Caco-2 (cell line): ENCODE measurements at regions of chr19 and their contacts with region 1.

Region 1: GRCh38 chr19:35648017-35648961 is at the start of gene COX6B1:
- DNase-seq: peak; percentile 95 to 97
- H3K4me3 ChIP-seq: peak within 1 kb of the TSS; percentile 62
- H3K4me3 Mint-ChIP-seq: peak within 1 kb of the TSS; percentile 97
- H3K27ac Mint-ChIP-seq: peak within 1 kb of the TSS; percentile 90
- H3K4me1 ChIP-seq: peaks cover 15% of the 10 kb centered on the region
- H3K4me1 Mint-ChIP-seq: peaks cover 12% of the 10 kb centered on the region
- H3K27me3 ChIP-seq: no peaks in the 10 kb centered on the region
- H3K27me3 Mint-ChIP-seq: no peaks in the 10 kb centered on the region
- CTCF ChIP-seq: no peak
- total RNA-seq, gene COX6B1: 551 and 639 TPM in 2 replicates

Region 2: GRCh38 chr19:35545001-35545911 is 103.0 kb before region 1 on chr19 and contains the start of gene TMEM147:
- CTCF ChIA-PET with region 1: interaction called, 3 read pairs
- POLR2A ChIA-PET with region 1: no interaction called
- intact Hi-C with region 1: loop called (anchors 5 kb)
- DNase-seq: peak; percentile 91 to 96
- H3K4me3 ChIP-seq: peak within 1 kb of the TSS; percentile 90
- H3K4me3 Mint-ChIP-seq: peak within 1 kb of the TSS; percentile 95
- H3K27ac Mint-ChIP-seq: peak within 1 kb of the TSS; percentile 91
- H3K4me1 ChIP-seq: peaks cover 14% of the 10 kb centered on the region
- H3K4me1 Mint-ChIP-seq: peaks cover 24% of the 10 kb centered on the region
- H3K27me3 ChIP-seq: no peaks in the 10 kb centered on the region
- H3K27me3 Mint-ChIP-seq: no peaks in the 10 kb centered on the region
- CTCF ChIP-seq: no peak
- total RNA-seq, gene TMEM147: 126 and 140 TPM in 2 replicates

Region 3: DNA sequence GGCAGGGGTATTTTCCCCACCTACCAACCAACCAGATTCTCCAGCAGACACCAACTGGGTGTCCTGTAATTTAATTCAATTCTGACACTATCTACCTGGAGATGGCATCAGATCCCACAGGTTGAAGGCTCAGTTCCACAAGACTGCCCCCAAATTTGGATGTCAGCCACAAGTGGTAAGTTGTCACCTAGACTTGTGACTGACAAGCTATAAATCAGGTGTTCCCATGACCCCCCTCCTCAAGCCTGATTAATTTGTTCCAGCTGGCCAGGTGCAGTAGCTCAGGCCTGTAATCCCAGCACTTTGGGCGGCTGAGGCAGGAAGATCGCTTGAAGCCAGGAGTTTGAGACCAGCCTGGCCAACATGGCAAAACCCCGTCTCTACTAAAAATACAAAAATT is 46.3 kb before region 1 on chr19:
- CTCF ChIA-PET with region 1: no interaction called
- POLR2A ChIA-PET with region 1: no interaction called
- intact Hi-C with region 1: no loop called
- DNase-seq: no peak
- H3K4me3 ChIP-seq: no peak overlapping the region
- H3K4me3 Mint-ChIP-seq: no peak overlapping the region
- H3K27ac Mint-ChIP-seq: no peak overlapping the region
- H3K4me1 ChIP-seq: peaks cover 11% of the 10 kb centered on the region
- H3K4me1 Mint-ChIP-seq: peaks cover 14% of the 10 kb centered on the region
- H3K27me3 ChIP-seq: no peaks in the 10 kb centered on the region
- H3K27me3 Mint-ChIP-seq: no peaks in the 10 kb centered on the region
- CTCF ChIP-seq: no peak

Region 4: GRCh38 chr19:35612559-35613321 is 35.5 kb before region 1 on chr19 and contains the start of gene HAUS5:
- CTCF ChIA-PET with region 1: interaction called, 3 read pairs
- POLR2A ChIA-PET with region 1: interaction called, 4 read pairs
- intact Hi-C with region 1: loop called (anchors 2 kb)
- DNase-seq: peak; percentile 95 to 97
- H3K4me3 ChIP-seq: peak within 1 kb of the TSS; percentile 94
- H3K4me3 Mint-ChIP-seq: peak within 1 kb of the TSS; percentile 89
- H3K27ac Mint-ChIP-seq: peak within 1 kb of the TSS; percentile 93
- H3K4me1 ChIP-seq: 0 out of 2 replicates have a peak, but pooled peaks cover 4% of the 10 kb centered on the region
- H3K4me1 Mint-ChIP-seq: peaks cover 9% of the 10 kb centered on the region
- H3K27me3 ChIP-seq: no peaks in the 10 kb centered on the region
- H3K27me3 Mint-ChIP-seq: no peaks in the 10 kb centered on the region
- CTCF ChIP-seq: no peak
- total RNA-seq, gene HAUS5: 26.4 and 27.9 TPM in 2 replicates

Region 5: DNA sequence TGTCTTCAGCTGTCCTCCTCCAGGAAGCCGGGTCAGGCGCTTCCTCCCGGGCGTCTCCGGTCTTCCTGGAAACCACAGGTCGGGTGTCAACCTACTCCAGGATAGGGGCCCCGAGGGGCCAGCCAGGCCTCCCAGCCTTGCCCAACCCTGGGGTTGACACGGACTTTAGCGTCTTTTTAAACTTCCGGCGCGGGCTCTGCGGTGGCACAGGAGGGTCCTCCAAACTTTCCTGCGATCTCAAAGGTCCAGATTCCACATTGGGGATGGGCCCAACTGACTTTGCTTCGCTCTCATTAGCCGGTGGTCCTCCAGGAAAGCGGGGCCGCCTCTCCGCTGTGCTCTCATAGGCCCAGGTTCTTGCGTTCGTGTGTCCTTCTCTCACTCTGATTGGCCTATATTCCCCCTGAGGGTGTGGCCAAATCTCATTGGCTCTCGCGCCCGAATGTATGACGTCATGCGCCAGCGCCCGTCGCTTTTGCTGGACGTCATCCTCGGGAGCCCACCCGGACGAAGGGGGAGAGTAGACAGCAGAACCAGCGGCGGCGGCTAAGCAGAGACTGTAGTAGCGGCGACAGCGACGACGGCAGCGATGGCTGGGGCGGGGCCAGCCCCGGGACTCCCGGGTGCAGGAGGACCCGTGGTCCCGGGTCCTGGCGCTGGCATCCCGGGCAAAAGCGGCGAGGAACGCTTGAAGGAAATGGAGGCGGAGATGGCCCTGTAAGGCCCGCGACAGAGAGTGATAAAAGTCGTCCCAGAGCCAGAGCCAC is 19.5 kb before region 1 on chr19 and contains the start of gene RBM42:
- CTCF ChIA-PET with region 1: no interaction called
- POLR2A ChIA-PET with region 1: interaction called, 3 read pairs
- intact Hi-C with region 1: loop called (anchors 1 kb)
- DNase-seq: peak; percentile 99
- H3K4me3 ChIP-seq: peak within 1 kb of the TSS; percentile 90
- H3K4me3 Mint-ChIP-seq: peak within 1 kb of the TSS; percentile 100
- H3K27ac Mint-ChIP-seq: peak within 1 kb of the TSS; percentile 100
- H3K4me1 ChIP-seq: no peaks in the 10 kb centered on the region
- H3K4me1 Mint-ChIP-seq: peaks cover 7% of the 10 kb centered on the region
- H3K27me3 ChIP-seq: no peaks in the 10 kb centered on the region
- H3K27me3 Mint-ChIP-seq: no peaks in the 10 kb centered on the region
- CTCF ChIP-seq: no peak
- total RNA-seq, gene RBM42: 140 and 165 TPM in 2 replicates

Region 6: GRCh38 chr19:35661995-35662340 is 13.7 kb after region 1 on chr19:
- CTCF ChIA-PET with region 1: no interaction called
- POLR2A ChIA-PET with region 1: interaction called, 11 read pairs
- intact Hi-C with region 1: loop called (anchors 2 kb)
- DNase-seq: no peak
- H3K4me3 ChIP-seq: no peak overlapping the region
- H3K4me3 Mint-ChIP-seq: no peak overlapping the region
- H3K27ac Mint-ChIP-seq: no peak overlapping the region
- H3K4me1 ChIP-seq: no peaks in the 10 kb centered on the region
- H3K4me1 Mint-ChIP-seq: no peaks in the 10 kb centered on the region
- H3K27me3 ChIP-seq: no peaks in the 10 kb centered on the region
- H3K27me3 Mint-ChIP-seq: no peaks in the 10 kb centered on the region
- CTCF ChIP-seq: no peak

Region 7: DNA sequence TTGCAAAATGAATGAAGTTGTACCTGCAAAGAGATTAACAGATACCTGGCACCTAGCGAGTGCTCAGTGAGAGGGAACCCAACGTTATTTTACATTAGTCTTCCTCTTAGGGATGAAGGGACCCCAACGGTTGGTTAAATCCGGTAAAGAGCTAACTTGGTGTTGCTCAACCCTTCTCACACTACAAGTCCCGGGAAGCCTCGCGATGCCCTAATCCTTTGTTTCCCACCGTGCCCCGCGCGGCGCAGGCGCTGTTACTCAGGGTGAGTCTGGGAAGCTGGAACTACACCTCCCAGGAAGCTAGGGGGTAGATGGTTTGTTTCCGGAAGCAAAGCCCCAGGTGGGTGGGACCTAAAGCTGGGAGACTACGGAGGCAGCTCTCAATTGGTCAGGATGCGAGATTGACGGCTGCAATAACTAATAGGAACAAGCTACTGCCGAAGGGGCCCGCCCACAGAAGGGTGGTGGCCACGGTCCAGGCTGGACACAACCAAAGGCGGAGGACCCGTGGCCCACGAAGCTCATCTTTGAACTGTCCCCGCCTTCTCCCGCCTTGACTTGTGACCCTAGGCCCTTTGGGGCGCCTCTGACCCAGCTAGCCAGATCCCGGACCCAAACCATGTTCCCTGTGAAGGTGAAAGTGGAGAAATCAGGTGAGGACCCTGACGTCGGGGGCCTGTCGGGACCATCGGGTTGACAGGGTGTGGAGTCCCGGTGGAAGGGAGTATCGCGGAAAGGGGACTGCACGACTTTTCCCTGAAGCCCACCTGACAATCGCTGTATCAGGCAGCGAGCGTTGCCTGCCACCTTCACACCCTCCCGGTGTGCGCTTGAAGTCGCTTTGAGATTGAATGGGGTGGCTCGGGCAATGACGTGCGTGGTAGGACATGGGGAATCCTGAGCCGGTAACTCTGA is 100.1 kb after region 1 on chr19 and contains the start of gene LIN37:
- CTCF ChIA-PET with region 1: no interaction called
- POLR2A ChIA-PET with region 1: interaction called, 11 read pairs
- intact Hi-C with region 1: no loop called
- DNase-seq: peak; percentile 99
- H3K4me3 ChIP-seq: peak within 1 kb of the TSS; percentile 58
- H3K4me3 Mint-ChIP-seq: peak within 1 kb of the TSS; percentile 89
- H3K27ac Mint-ChIP-seq: peak within 1 kb of the TSS; percentile 71
- H3K4me1 ChIP-seq: peaks cover 7% of the 10 kb centered on the region
- H3K4me1 Mint-ChIP-seq: peaks cover 18% of the 10 kb centered on the region
- H3K27me3 ChIP-seq: no peaks in the 10 kb centered on the region
- H3K27me3 Mint-ChIP-seq: no peaks in the 10 kb centered on the region
- CTCF ChIP-seq: no peak
- total RNA-seq, gene LIN37: 8.1 and 10.2 TPM in 2 replicates

Region 8: DNA sequence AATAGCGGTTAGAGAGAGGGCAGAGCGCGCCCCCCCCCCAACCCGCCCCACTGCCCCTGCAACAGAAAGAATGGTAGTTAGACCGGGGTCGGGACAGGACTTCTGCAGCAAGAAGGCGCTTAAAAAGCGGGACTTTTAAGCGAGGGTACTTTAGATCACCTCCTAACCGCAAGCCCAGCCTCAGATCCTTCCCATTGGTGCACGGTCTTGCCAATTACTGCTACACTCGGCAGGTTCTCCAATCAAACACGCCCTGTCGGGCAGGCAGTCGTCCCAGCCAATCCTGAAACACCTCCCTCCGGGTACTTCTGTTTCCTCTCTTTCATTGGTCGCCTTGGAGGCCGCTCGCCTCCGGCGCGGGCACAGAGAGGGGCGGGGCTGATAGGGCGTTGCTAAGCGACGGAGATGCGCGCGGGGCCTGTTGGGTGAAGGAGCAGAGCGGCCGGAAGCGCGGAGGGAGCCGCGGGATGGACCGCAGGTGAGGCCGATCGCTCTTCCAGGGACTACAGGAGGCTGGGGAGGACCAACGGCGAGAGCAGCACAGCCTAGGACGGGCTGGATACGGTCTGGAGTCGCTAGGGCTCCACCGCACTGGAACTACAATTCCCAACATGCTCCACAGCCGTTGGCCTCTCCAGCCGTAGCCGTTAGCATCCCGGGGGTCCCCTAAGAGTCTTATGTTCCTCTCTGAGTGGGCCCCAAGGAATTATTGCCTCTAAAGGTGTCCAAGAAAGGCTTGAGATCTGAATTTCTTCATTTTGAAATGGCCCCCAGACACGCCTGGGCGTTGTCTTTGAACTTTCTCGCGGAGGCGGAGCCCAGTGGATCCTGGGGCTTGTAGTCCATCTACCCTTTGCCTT is 109.7 kb after region 1 on chr19 and contains the start of gene PROSER3:
- CTCF ChIA-PET with region 1: no interaction called
- POLR2A ChIA-PET with region 1: no interaction called
- intact Hi-C with region 1: loop called (anchors 5 kb)
- DNase-seq: peak; percentile 99 to 100
- H3K4me3 ChIP-seq: peak within 1 kb of the TSS; percentile 68
- H3K4me3 Mint-ChIP-seq: peak within 1 kb of the TSS; percentile 88
- H3K27ac Mint-ChIP-seq: peak within 1 kb of the TSS; percentile 92
- H3K4me1 ChIP-seq: peaks cover 6% of the 10 kb centered on the region
- H3K4me1 Mint-ChIP-seq: peaks cover 6% of the 10 kb centered on the region
- H3K27me3 ChIP-seq: no peaks in the 10 kb centered on the region
- H3K27me3 Mint-ChIP-seq: no peaks in the 10 kb centered on the region
- CTCF ChIP-seq: no peak
- total RNA-seq, gene PROSER3: 34.6 and 37.0 TPM in 2 replicates